Mammary epithelial cell (primary cell): ENCODE measurements at regions of chr3 and their contacts with region 1.

Region 1: DNA sequence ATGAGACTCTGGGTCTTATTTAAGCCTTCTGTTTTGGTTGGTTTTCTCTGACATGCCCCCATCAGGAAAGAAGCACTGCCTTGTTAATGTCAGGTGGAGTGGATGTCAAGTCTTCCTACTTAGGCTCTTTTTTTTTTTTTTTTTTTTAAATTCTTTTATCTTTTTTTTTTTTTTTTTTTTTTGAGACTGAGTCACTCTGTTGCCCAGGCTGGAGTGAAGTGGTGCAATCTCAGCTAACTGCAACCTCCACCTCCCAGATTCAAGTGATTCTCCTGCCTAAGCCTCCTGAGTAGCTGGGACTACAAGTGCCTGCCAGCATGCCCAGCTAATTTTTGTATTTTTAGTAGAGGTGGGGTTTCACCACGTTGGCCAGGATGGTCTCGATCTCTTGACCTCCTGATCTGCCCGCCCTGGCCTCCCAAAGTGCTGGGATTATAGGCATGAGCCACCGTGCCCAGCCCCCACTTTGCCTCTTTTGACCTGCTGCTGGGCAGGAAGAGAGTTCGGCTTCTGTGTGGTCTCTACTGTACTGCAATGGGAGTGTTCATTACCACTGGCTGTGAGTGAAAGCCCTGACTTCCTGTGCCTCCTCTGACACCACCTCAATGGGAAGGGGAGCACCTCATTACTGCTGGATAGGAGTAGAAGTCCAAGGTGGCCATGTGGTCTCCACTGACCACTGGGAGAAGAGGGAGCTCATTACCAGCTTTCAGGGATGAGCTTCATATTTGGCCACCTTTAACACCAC is 10.9 kb downstream of the CTDSPL start:
- DNase-seq: no peak
- H3K4me3 ChIP-seq: no peak overlapping the region
- H3K27ac ChIP-seq: no peak overlapping the region
- H3K4me1 ChIP-seq: peaks cover 6% of the 10 kb centered on the region
- H3K27me3 ChIP-seq: no peaks in the 10 kb centered on the region
- CTCF ChIP-seq: no peak

Region 2: DNA sequence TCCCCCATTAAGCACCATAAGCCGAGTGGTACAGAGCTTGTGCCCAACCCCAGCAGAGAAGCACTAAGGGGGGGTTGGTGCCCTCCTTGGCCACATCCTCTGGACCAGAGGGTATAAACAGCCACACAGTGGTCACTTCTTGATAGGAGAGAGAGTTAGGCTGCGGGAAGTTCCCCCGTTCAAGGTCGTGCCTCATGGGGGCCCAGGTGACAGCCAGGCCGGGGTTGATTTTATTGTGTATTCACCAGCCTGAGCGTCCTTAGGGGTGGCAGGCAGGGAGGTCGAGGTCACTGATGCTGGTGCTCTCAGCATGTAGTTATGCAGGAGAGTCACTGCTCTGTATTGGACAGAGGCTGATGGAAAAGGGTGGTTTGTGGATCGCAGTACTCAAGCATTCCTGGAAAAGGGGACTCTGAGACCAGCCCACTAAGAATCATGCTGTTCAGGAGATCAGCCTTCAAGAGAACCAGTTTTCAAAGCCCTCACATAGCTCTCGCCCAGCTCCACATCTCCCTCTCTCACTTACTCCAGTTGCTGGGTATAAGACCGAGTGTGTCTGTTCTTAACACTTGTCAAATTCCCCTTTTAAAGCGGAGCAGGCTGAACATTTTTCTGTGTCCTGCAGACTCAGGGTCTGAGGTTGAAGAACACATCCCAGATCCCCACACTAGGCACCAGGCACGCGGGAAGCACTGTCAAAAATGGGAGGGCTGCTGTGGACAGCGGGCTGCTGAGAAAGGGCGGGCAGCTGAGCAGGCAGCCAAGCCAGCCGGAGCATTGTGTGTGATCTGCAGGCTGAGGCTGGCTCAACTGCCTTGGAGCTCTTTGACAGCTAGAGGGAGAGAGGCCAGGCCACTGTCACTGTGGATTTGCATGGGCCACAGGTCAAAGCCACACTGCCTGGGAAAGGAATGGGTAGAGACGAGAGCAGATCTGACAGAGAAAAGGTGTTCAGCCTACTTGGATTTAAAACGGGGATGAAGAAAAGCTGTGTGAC is 418.9 kb before region 1 on chr3:
- CTCF ChIA-PET with region 1: interaction called, 16 read pairs
- dilution Hi-C with region 1: no loop called
- in situ Hi-C with region 1: no loop called
- intact Hi-C with region 1: no loop called
- DNase-seq: no peak
- H3K4me3 ChIP-seq: no peak overlapping the region
- H3K27ac ChIP-seq: no peak overlapping the region
- H3K4me1 ChIP-seq: peaks cover 8% of the 10 kb centered on the region
- H3K27me3 ChIP-seq: peaks cover 30% of the 10 kb centered on the region
- CTCF ChIP-seq: peak in 1 of 2 donors; percentile 6

Region 3: DNA sequence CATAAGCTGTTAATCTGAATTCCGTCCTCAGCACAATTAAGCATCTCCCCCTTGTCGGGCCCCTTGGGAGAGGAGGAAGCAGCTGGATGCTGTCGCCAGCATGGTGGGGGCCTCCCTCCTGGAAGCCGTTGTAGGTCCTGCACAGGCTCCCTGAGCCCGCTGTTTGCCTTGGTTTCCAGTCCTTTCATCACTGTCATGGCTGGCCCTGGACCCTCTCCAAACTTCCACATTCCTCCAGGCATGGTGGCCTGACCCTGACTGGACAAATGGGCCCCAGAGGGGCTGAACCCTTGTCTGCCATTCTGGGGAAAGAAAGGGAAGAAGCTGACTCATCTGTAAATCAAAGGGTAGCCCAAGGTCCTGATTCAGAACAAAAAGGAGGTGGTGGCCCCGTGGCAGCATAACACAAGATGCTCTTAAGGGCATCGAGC is 397.7 kb before region 1 on chr3:
- CTCF ChIA-PET with region 1: no interaction called
- dilution Hi-C with region 1: no loop called
- in situ Hi-C with region 1: no loop called
- intact Hi-C with region 1: no loop called
- DNase-seq: no peak
- H3K4me3 ChIP-seq: no peak overlapping the region
- H3K27ac ChIP-seq: no peak overlapping the region
- H3K4me1 ChIP-seq: no peaks in the 10 kb centered on the region
- H3K27me3 ChIP-seq: no peaks in the 10 kb centered on the region
- CTCF ChIP-seq: no peak

Region 4: GRCh38 chr3:37814547-37814946 is 58.0 kb before region 1 on chr3:
- CTCF ChIA-PET with region 1: no interaction called
- dilution Hi-C with region 1: no loop called
- in situ Hi-C with region 1: no loop called
- intact Hi-C with region 1: no loop called
- DNase-seq: no peak
- H3K4me3 ChIP-seq: no peak overlapping the region
- H3K27ac ChIP-seq: no peak overlapping the region
- H3K4me1 ChIP-seq: no peaks in the 10 kb centered on the region
- H3K27me3 ChIP-seq: no peaks in the 10 kb centered on the region
- CTCF ChIP-seq: peak; percentile 16 to 24

Region 5: DNA sequence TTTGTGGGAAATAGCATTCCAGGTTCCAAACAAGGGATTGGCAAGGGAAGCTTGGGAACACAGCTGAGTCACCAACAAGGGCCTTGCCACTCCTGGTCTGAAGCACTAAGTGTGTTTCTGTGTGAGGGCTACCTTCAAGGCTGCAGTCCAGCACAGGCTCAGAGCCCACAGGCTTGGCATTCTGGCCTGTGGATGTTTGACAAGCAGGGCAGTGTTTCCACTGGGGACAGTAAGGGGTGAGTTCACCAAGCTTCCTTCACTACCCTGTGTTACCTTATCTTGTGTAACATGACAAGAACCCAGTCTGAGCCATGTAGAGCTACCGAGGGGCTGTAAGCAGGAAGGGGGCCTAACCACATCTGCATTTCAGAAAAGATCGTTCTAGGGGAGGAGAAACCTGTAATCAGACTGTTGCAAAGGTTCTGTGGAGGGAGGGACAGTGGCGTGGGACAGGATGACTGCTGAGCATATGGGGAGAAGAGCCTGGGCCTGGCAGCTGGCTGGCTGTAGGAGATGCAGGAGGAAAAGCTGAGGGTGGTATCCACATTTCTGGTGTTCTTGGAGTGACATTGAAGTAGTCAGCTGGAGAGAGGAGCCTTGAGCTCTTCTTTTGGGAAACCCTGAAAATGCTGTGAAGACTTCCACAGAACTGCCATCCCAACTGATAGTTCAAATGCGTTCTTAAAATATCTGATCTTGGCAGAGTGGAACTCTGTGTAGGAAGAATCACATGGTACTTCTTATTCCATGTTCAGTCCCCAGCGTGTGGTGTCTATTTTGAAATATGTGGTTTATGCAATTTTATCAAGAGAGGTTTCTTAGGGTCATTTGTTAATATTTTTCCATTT is 50.4 kb after region 1 on chr3:
- CTCF ChIA-PET with region 1: no interaction called
- dilution Hi-C with region 1: loop called (anchors 5 kb)
- in situ Hi-C with region 1: no loop called
- intact Hi-C with region 1: no loop called
- DNase-seq: no peak
- H3K4me3 ChIP-seq: no peak overlapping the region
- H3K27ac ChIP-seq: peak overlapping the region; percentile 30
- H3K4me1 ChIP-seq: peaks cover 13% of the 10 kb centered on the region
- H3K27me3 ChIP-seq: no peaks in the 10 kb centered on the region
- CTCF ChIP-seq: no peak